CD4-positive, alpha-beta memory T cell (primary cell): ENCODE measurements at regions of chr1 and their contacts with region 1.

Region 1: DNA sequence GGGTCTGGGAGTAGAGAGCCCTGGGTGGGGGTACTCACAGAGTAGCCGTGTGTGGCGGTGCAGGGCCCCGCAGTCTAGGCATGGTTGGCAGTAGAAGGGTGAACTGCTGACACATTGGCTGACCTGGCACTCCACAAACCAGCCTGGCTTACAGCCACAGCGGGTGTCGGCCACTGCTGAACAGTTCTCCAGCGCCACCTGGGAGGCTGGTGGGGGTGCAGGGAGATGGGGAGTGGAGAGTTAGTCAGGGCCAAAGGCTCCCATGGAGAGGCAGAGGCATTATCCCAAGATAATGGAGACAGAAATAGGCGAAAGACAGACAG is 1.5 kb downstream of the TNFRSF25 start:
- DNase-seq: peak in 4 of 5 donors; percentile 25 to 65 (median 44)
- H3K4me3 ChIP-seq: peak overlapping the region; percentile 79 to 85
- H3K4me3 Mint-ChIP-seq: peak overlapping the region; percentile 88 to 99 (median 94)
- H3K27ac ChIP-seq: peak overlapping the region; percentile 95
- H3K27ac Mint-ChIP-seq: peak overlapping the region; percentile 97 to 100 (median 97)
- H3K4me1 ChIP-seq: peaks cover 60% of the 10 kb centered on the region
- H3K4me1 Mint-ChIP-seq: peaks cover 25 to 74% (median 47%) of the 10 kb centered on the region in 4 donors
- H3K27me3 ChIP-seq: no peaks in the 10 kb centered on the region
- H3K27me3 Mint-ChIP-seq: no peaks in the 10 kb centered on the region

Region 2: GRCh38 chr1:6359216-6360116 is 105.0 kb before region 1 on chr1:
- CTCF ChIA-PET with region 1: no interaction called
- POLR2A ChIA-PET with region 1: interaction called, 11 read pairs
- intact Hi-C with region 1: no loop called
- DNase-seq: peak; percentile 50 to 74 (median 62)
- H3K4me3 ChIP-seq: peak overlapping the region; percentile 24 to 38
- H3K4me3 Mint-ChIP-seq: peak overlapping the region; percentile 71 to 90 (median 77)
- H3K27ac ChIP-seq: peak overlapping the region; percentile 76
- H3K27ac Mint-ChIP-seq: peak overlapping the region; percentile 94 to 97 (median 96)
- H3K4me1 ChIP-seq: peaks cover 54% of the 10 kb centered on the region
- H3K4me1 Mint-ChIP-seq: peaks cover 29 to 65% (median 47%) of the 10 kb centered on the region in 4 donors
- H3K27me3 ChIP-seq: no peaks in the 10 kb centered on the region
- H3K27me3 Mint-ChIP-seq: no peaks in the 10 kb centered on the region

Region 3: DNA sequence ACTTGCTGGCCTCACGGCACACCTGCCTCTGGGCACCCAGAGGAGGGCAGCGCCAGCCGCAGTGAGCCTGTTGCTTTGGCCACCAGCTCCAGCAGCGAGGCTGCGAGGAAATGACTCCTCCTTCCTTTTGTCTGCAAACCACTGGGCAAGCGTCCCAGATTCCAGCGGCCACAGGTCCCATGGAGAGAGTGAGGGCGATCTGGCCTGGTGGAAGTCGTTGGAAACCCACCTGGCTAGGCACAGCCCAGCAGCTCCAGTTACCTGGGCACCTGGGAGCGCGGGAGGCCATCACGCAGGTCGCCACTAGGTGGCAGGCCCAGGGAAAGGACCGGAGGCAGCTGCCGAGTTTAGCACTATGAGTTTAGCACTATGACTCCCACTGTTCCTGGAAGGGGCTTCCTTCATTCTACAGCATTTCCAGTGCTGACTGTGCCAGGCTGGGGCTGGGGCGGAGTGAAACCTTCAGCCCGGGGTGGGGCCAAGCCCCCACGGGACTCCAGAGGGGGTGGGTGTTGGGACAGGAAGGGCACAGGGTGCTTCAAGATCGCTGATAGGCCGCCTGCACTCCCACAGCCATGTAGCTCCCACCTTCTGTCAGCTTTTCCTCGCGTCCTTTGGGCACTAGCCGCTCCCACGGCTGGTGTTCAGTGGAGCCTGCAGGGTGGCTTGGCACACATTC is 41.0 kb before region 1 on chr1:
- CTCF ChIA-PET with region 1: interaction called, 4 read pairs
- POLR2A ChIA-PET with region 1: interaction called, 16 read pairs
- intact Hi-C with region 1: no loop called
- DNase-seq: peak; percentile 64 to 74 (median 69)
- H3K4me3 ChIP-seq: peak overlapping the region in 1 of 2 donors; percentile 38
- H3K4me3 Mint-ChIP-seq: peak overlapping the region; percentile 46 to 76 (median 68)
- H3K27ac ChIP-seq: no peak overlapping the region
- H3K27ac Mint-ChIP-seq: no peak overlapping the region
- H3K4me1 ChIP-seq: peaks cover 35% of the 10 kb centered on the region
- H3K4me1 Mint-ChIP-seq: peaks cover 6 to 35% (median 19%) of the 10 kb centered on the region in 4 donors
- H3K27me3 ChIP-seq: peaks cover 37% of the 10 kb centered on the region
- H3K27me3 Mint-ChIP-seq: peaks cover 22 to 24% of the 10 kb centered on the region in 2 donors

Region 4: DNA sequence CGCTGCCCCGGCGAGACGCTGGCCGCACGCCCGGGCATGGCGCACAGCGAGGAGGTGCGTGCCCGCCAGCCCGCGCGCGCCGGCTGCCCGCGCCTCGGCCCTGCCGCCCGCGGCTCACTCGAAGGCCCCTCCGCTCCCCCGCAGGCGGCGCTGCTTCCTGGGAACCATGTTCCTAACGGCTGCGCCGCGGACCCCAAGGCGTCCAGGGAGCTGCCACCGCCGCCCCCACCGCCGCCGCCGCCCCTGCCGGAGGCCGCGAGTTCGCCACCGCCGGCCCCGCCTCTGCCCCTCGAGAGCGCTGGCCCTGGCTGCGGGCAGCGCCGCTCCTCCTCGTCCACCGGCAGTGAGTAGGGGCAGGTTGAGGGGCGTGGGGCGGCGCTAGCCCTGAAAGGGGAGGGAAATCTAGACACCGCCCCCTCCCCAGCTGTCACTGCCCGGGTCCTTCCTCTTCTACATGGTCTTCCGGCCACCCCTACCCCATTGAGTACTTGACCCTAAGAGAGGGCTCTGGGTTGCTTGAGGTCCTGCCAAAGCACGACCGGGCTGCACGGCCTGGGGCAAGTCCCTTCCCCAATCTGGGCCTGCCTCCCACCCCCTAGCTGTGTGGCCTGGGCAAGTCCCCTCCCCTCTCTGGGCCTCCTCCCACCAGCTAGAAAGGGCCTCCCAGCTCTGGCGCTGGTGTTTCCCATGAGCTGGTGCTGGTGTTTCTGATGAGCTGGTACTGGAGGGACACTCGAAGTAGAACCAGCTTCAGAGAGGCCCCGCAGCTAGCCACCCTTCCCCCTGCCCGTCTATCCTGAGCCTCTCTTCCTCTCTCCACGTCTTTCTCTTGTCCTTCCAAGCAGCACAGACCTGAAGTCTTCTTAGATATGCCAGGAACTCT is 15.5 kb before region 1 on chr1:
- CTCF ChIA-PET with region 1: interaction called, 53 read pairs
- POLR2A ChIA-PET with region 1: interaction called, 390 read pairs
- intact Hi-C with region 1: loop called (anchors 1 kb)
- DNase-seq: peak in 2 of 5 donors; percentile 37 to 70
- H3K4me3 ChIP-seq: no peak overlapping the region
- H3K4me3 Mint-ChIP-seq: peak overlapping the region in 6 of 8 donors; percentile 42 to 84 (median 60)
- H3K27ac ChIP-seq: no peak overlapping the region
- H3K27ac Mint-ChIP-seq: peak overlapping the region in 6 of 7 donors; percentile 23 to 86 (median 70)
- H3K4me1 ChIP-seq: peaks cover 32% of the 10 kb centered on the region
- H3K4me1 Mint-ChIP-seq: peaks cover 15 to 39% (median 28%) of the 10 kb centered on the region in 4 donors
- H3K27me3 ChIP-seq: peaks cover 11% of the 10 kb centered on the region
- H3K27me3 Mint-ChIP-seq: peaks cover 25 to 32% of the 10 kb centered on the region in 2 donors

Region 5: GRCh38 chr1:6489799-6490180 is 25.3 kb after region 1 on chr1:
- CTCF ChIA-PET with region 1: interaction called, 8 read pairs
- POLR2A ChIA-PET with region 1: interaction called, 28 read pairs
- intact Hi-C with region 1: no loop called
- DNase-seq: peak; percentile 73 to 80 (median 77)
- H3K4me3 ChIP-seq: peak overlapping the region; percentile 78 to 80
- H3K4me3 Mint-ChIP-seq: peak overlapping the region; percentile 69 to 87 (median 81)
- H3K27ac ChIP-seq: peak overlapping the region; percentile 57
- H3K27ac Mint-ChIP-seq: peak overlapping the region in 3 of 7 donors; percentile 47 to 72 (median 59)
- H3K4me1 ChIP-seq: peaks cover 28% of the 10 kb centered on the region
- H3K4me1 Mint-ChIP-seq: peaks cover 15 to 53% (median 31%) of the 10 kb centered on the region in 4 donors
- H3K27me3 ChIP-seq: peaks cover 10% of the 10 kb centered on the region
- H3K27me3 Mint-ChIP-seq: peaks cover 6 to 9% of the 10 kb centered on the region in 2 donors

Region 6: DNA sequence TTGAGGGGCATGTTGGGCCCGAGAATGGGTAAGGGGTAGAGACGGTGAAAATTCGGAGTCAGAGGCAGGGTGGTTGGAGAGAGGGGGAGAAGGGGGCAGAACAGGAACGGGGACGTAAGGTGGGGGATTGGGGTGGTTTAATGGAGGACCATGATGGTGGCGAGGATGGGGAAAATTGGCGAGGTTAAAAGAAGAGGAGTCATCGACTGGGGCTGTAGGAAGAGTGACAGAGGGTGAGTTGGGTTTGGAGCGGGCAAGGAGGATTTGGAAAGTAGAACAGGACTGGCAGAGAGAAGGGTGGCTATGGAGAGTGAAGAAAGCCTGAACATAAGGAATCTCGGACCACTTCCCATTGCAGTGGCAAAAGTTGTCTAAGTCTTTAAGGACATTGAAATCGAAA is 104.6 kb after region 1 on chr1:
- CTCF ChIA-PET with region 1: no interaction called
- POLR2A ChIA-PET with region 1: no interaction called
- intact Hi-C with region 1: no loop called
- DNase-seq: no peak
- H3K4me3 ChIP-seq: no peak overlapping the region
- H3K4me3 Mint-ChIP-seq: no peak overlapping the region
- H3K27ac ChIP-seq: no peak overlapping the region
- H3K27ac Mint-ChIP-seq: peak overlapping the region in 1 of 7 donors; percentile 42
- H3K4me1 ChIP-seq: no peaks in the 10 kb centered on the region
- H3K4me1 Mint-ChIP-seq: no peaks in the 10 kb centered on the region
- H3K27me3 ChIP-seq: no peaks in the 10 kb centered on the region
- H3K27me3 Mint-ChIP-seq: peaks cover 0 to 2% of the 10 kb centered on the region in 2 donors

Region 7: DNA sequence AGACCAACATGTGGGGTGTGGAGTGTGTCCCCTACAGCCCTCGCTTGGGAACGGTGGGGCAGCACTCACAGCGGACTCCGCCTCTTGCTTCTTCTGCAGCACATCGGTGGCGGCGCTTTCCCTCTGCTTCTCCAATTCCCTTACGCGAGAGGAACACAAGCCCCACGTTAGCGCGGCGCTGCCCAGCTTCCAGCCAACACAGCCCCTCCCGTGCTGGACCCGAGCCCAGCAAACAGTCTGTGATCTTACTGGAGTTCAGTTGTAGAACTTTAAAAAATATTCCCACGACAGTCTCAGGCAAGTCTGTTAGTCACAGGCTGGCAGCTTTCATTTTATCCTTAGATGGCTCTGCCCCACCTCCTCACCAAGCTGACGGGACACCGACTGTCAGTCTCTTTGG is 173.8 kb after region 1 on chr1:
- CTCF ChIA-PET with region 1: no interaction called
- POLR2A ChIA-PET with region 1: no interaction called
- intact Hi-C with region 1: no loop called
- DNase-seq: no peak
- H3K4me3 ChIP-seq: no peak overlapping the region
- H3K4me3 Mint-ChIP-seq: no peak overlapping the region
- H3K27ac ChIP-seq: no peak overlapping the region
- H3K27ac Mint-ChIP-seq: peak overlapping the region in 1 of 7 donors; percentile 18
- H3K4me1 ChIP-seq: no peaks in the 10 kb centered on the region
- H3K4me1 Mint-ChIP-seq: no peaks in the 10 kb centered on the region
- H3K27me3 ChIP-seq: no peaks in the 10 kb centered on the region
- H3K27me3 Mint-ChIP-seq: no peaks in the 10 kb centered on the region

Region 8: DNA sequence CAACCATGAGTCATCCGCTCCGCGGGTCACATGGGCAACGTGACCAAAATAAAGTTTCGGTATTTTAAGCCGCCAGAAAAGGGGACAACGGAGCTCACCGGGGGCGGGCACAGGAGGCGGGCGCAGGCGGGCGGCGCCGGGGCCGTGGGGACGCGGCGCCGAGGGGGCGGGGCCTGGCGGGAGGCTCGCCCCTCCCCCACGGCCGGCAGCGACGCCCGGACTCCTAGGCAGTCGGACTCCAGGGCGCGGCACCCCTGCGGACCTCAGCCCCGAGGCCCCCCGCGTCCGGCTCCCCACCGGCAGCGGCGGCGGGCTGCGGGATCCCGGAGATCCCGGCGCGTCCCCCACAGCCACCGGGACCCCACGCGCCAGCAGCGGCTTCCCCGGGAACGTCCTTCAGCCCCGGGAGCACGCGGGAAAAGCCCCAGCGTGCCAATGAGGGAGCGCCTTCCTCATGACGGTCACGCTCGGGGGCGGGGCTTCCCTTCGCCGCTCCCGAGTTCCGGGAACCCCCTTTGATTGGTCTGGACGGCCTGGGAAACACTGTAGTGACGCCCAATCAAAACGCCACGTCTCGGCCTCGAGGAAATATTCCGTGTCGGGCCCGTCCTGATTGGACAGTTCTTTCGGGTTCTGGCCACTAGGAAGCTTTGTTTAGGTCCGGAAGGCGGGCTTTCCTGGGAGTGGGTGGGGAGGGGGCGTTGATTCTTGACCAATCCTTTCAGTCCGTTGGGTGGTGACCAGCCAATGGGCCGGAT is 320.3 kb after region 1 on chr1:
- CTCF ChIA-PET with region 1: no interaction called
- POLR2A ChIA-PET with region 1: no interaction called
- intact Hi-C with region 1: loop called (anchors 10 kb)
- DNase-seq: peak; percentile 89 to 100 (median 100)
- H3K4me3 ChIP-seq: peak overlapping the region; percentile 36 to 69
- H3K4me3 Mint-ChIP-seq: peak overlapping the region; percentile 86 to 98 (median 90)
- H3K27ac ChIP-seq: peak overlapping the region; percentile 84
- H3K27ac Mint-ChIP-seq: peak overlapping the region; percentile 89 to 95 (median 93)
- H3K4me1 ChIP-seq: peaks cover 39% of the 10 kb centered on the region
- H3K4me1 Mint-ChIP-seq: peaks cover 35 to 48% (median 42%) of the 10 kb centered on the region in 4 donors
- H3K27me3 ChIP-seq: no peaks in the 10 kb centered on the region
- H3K27me3 Mint-ChIP-seq: no peaks in the 10 kb centered on the region